ENCODE measurements at regions of chr10 and their contacts with region 1.

Region 1: GRCh38 chr10:88386821-88387773 is 196.0 kb downstream of the RNLS start:
- DNase-seq: peak; percentile 43
- ATAC-seq: peak; percentile 64
- H3K4me3 ChIP-seq: peak overlapping the region in 1 of 2 experiments; percentile 2; a peak in 2 of 4 replicates
- H3K27ac ChIP-seq: no peak overlapping the region
- H3K4me1 ChIP-seq: peaks cover 26 to 30% of the 10 kb centered on the region in 2 experiments
- H3K27me3 ChIP-seq: no peaks in the 10 kb centered on the region
- CTCF ChIP-seq: no peak
- POLR2A ChIP-seq: no peak
- RAD21 ChIP-seq: no peak

Region 2: DNA sequence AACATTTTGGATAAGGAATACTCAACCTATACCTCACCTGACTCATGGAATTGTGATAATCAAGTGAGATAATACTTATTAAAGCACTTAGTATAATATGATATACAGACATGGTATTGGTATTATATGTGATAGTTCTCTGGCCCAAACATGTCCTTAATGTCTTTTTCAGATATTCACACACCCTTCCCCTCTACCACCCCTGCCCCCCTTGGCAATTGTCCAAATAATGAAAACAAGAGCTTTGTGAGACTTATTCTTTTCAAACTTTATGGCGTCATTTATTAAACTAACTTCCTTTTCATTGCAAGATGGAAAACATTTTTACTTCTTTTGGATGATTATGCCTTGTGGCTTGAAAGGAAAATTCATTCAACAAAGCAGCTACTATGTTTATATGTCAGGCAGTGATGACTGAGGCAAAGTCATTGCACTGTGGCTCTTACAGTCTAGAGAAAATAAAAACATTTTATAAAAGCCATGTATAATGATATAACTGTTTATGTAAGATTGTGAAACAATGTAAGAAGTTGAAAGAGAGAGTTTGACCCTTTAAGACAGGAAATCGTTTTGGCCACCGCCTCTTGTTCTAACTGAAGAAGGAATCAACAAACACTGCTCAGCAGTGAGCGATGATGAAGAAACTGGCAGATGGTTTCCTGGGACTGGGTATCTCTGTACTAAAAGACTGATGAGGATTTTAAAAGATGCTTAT is 855.0 kb before region 1 on chr10:
- CTCF ChIA-PET with region 1: no interaction called
- POLR2A ChIA-PET with region 1: no interaction called
- RAD21 ChIA-PET with region 1: no interaction called
- intact Hi-C with region 1: loop called (anchors 10 kb)
- DNase-seq: no peak
- ATAC-seq: no peak
- H3K4me3 ChIP-seq: no peak overlapping the region
- H3K27ac ChIP-seq: no peak overlapping the region
- H3K4me1 ChIP-seq: no peaks in the 10 kb centered on the region
- H3K27me3 ChIP-seq: no peaks in the 10 kb centered on the region
- CTCF ChIP-seq: no peak
- POLR2A ChIP-seq: no peak
- RAD21 ChIP-seq: no peak

Region 3: GRCh38 chr10:87850742-87851205 is 536.3 kb before region 1 on chr10:
- CTCF ChIA-PET with region 1: interaction called, 13 read pairs
- POLR2A ChIA-PET with region 1: interaction called, 3 read pairs
- RAD21 ChIA-PET with region 1: interaction called in 1 of 2 experiments, 3 read pairs
- intact Hi-C with region 1: no loop called
- DNase-seq: no peak
- ATAC-seq: peak; percentile 88
- H3K4me3 ChIP-seq: no peak overlapping the region
- H3K27ac ChIP-seq: no peak overlapping the region
- H3K4me1 ChIP-seq: peaks cover 3 to 23% of the 10 kb centered on the region in 2 experiments; a peak in 3 of 4 replicates
- H3K27me3 ChIP-seq: no peaks in the 10 kb centered on the region
- CTCF ChIP-seq: peak; percentile 59 to 70 (median 67); a peak in 5 of 6 replicates
- POLR2A ChIP-seq: no peak
- RAD21 ChIP-seq: peak; percentile 88

Region 4: DNA sequence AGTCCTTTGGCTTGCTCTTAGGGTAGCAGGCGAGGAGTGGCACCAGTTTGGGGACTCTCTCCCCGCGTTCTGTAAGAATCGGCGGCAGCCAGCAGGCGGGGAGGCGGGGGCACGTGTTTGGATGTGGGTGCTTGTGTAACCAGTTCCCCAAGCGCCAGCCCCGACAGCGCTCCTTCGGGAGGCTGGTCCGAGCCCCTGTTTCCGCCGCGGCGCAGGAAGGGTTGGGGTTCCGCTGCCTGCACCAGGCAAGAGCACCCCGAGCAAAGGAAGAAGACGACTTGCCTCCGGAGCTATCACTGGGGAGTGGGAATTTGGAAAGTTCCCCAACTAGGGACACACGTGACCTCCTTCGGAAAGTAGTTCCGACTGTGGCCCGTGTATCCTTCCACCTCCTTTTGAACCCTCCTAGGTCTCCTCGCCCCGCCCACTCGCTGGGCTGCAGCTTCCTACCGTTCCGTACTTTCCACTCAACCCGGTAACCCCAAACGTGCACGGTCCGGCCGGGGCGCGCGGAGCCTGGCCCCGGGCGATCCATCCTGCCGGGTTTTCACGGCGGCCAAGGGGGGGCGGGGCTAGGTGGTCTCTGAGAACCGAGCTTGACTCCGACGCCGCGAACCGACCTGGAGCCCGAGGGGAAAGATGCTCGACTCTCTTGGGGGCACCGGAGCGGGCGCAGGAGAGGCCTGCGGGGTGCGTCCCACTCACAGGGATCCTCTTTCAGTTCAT is 525.0 kb before region 1 on chr10:
- CTCF ChIA-PET with region 1: interaction called, 20 read pairs
- POLR2A ChIA-PET with region 1: interaction called, 16 read pairs
- RAD21 ChIA-PET with region 1: interaction called in 1 of 2 experiments, 3 read pairs
- intact Hi-C with region 1: loop called (anchors 2 kb)
- DNase-seq: peak; percentile 98
- ATAC-seq: peak; percentile 71
- H3K4me3 ChIP-seq: peak overlapping the region; percentile 84 to 93
- H3K27ac ChIP-seq: peak overlapping the region; percentile 94
- H3K4me1 ChIP-seq: peaks cover 14 to 28% of the 10 kb centered on the region in 2 experiments; a peak in 3 of 4 replicates
- H3K27me3 ChIP-seq: no peaks in the 10 kb centered on the region
- CTCF ChIP-seq: no peak
- POLR2A ChIP-seq: peak; percentile 87
- RAD21 ChIP-seq: no peak; the same call in 1 of the 2 replicates

Region 5: GRCh38 chr10:88108115-88108610 is 278.9 kb before region 1 on chr10:
- CTCF ChIA-PET with region 1: interaction called, 17 read pairs
- POLR2A ChIA-PET with region 1: no interaction called
- RAD21 ChIA-PET with region 1: no interaction called
- intact Hi-C with region 1: no loop called
- DNase-seq: peak; percentile 21
- ATAC-seq: peak; percentile 83
- H3K4me3 ChIP-seq: no peak overlapping the region
- H3K27ac ChIP-seq: no peak overlapping the region
- H3K4me1 ChIP-seq: peaks cover 10 to 29% of the 10 kb centered on the region in 2 experiments
- H3K27me3 ChIP-seq: no peaks in the 10 kb centered on the region
- CTCF ChIP-seq: peak; percentile 8 to 29 (median 25); a peak in 3 of 6 replicates
- POLR2A ChIP-seq: no peak
- RAD21 ChIP-seq: peak; percentile 58

Region 6: GRCh38 chr10:88114368-88114767 is 272.7 kb before region 1 on chr10:
- CTCF ChIA-PET with region 1: interaction called, 13 read pairs
- POLR2A ChIA-PET with region 1: no interaction called
- RAD21 ChIA-PET with region 1: no interaction called
- intact Hi-C with region 1: loop called (anchors 1 kb)
- DNase-seq: peak; percentile 35
- ATAC-seq: peak; percentile 69
- H3K4me3 ChIP-seq: no peak overlapping the region
- H3K27ac ChIP-seq: no peak overlapping the region
- H3K4me1 ChIP-seq: peaks cover 10 to 17% of the 10 kb centered on the region in 2 experiments
- H3K27me3 ChIP-seq: no peaks in the 10 kb centered on the region
- CTCF ChIP-seq: peak; percentile 61 to 69 (median 63); a peak in 5 of 6 replicates
- POLR2A ChIP-seq: no peak
- RAD21 ChIP-seq: peak; percentile 74

Region 7: GRCh38 chr10:88401671-88402347 is 14.7 kb after region 1 on chr10:
- CTCF ChIA-PET with region 1: interaction called, 20 read pairs
- POLR2A ChIA-PET with region 1: no interaction called
- RAD21 ChIA-PET with region 1: interaction called in 1 of 2 experiments, 3 read pairs
- intact Hi-C with region 1: no loop called
- DNase-seq: no peak
- ATAC-seq: peak; percentile 92
- H3K4me3 ChIP-seq: no peak overlapping the region
- H3K27ac ChIP-seq: no peak overlapping the region
- H3K4me1 ChIP-seq: peaks cover 0 to 10% of the 10 kb centered on the region in 2 experiments; a peak in 2 of 4 replicates
- H3K27me3 ChIP-seq: no peaks in the 10 kb centered on the region
- CTCF ChIP-seq: peak in 2 of 3 experiments; percentile 36 to 49; a peak in 3 of 6 replicates
- POLR2A ChIP-seq: no peak
- RAD21 ChIP-seq: peak; percentile 58